HCT116 (cell line): ENCODE measurements at regions of chr3 and their contacts with region 1.

Region 1: DNA sequence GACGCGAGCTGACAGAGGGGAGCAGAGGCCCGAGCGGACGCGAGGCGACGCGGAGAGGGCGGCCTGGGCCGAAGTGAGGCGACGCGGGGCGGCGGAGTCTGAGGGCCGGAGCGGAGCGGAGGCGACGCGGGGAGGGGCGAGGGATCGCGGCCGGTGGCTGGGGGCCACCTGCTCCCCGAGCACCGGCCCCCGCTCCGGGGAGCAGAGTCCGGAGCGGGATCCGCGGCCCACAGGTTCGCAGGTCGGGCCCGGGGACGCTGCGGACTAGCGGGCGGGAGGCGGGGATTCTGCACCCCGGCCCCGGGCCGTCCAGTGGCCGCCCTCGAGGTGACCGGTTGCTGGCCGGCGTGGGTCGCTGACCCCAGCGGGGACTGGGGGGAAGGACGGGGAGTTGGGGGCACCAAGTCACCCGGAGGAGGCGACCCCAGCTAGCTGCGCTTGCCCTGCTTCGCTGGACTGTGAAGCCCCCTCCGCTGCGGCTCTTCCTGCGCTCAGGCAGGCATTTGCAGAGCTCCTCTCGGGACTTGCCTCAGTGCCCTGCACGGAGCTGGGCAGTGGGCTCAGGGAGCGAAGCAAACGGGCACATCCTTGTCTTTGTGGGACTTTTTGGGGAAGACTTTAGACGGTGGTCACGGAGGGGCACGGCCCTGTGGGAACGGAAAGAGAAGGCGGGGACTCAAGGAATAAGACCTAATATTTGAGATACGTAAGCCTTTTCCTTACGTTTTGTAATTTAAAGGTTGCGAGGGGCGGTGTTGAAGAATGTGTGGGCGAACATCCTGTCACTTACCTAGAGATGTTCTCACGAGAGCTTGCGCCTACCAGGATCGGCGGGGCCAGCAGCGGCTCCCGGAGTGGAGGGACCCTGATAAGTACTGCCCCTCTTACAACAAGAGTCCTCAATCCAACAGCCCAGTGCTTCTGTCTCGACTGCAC is 569 bp downstream of the HMCES start:
- DNase-seq: peak; percentile 10
- ATAC-seq: peak; percentile 53
- H3K4me3 ChIP-seq: peak overlapping the region; percentile 86 to 96
- H3K27ac ChIP-seq: peak overlapping the region; percentile 79
- H3K4me1 ChIP-seq: peaks cover 10 to 18% of the 10 kb centered on the region in 2 experiments
- H3K27me3 ChIP-seq: no peaks in the 10 kb centered on the region
- CTCF ChIP-seq: no peak
- POLR2A ChIP-seq: no peak
- RAD21 ChIP-seq: no peak

Region 2: GRCh38 chr3:129316131-129317013 is 37.1 kb after region 1 on chr3:
- CTCF ChIA-PET with region 1: no interaction called
- POLR2A ChIA-PET with region 1: interaction called, 10 read pairs
- RAD21 ChIA-PET with region 1: no interaction called
- intact Hi-C with region 1: no loop called
- DNase-seq: peak; percentile 64
- ATAC-seq: peak; percentile 62
- H3K4me3 ChIP-seq: peak overlapping the region; percentile 85 to 93
- H3K27ac ChIP-seq: peak overlapping the region; percentile 84
- H3K4me1 ChIP-seq: peaks cover 6 to 25% of the 10 kb centered on the region in 2 experiments; a peak in 3 of 4 replicates
- H3K27me3 ChIP-seq: no peaks in the 10 kb centered on the region
- CTCF ChIP-seq: peak in 2 of 3 experiments; percentile 45 to 65; a peak in 4 of 6 replicates
- POLR2A ChIP-seq: peak; percentile 98
- RAD21 ChIP-seq: no peak